Heart right ventricle (tissue), 16 donors: ENCODE measurements at regions of chr2 and their contacts with region 1.

Region 1: DNA sequence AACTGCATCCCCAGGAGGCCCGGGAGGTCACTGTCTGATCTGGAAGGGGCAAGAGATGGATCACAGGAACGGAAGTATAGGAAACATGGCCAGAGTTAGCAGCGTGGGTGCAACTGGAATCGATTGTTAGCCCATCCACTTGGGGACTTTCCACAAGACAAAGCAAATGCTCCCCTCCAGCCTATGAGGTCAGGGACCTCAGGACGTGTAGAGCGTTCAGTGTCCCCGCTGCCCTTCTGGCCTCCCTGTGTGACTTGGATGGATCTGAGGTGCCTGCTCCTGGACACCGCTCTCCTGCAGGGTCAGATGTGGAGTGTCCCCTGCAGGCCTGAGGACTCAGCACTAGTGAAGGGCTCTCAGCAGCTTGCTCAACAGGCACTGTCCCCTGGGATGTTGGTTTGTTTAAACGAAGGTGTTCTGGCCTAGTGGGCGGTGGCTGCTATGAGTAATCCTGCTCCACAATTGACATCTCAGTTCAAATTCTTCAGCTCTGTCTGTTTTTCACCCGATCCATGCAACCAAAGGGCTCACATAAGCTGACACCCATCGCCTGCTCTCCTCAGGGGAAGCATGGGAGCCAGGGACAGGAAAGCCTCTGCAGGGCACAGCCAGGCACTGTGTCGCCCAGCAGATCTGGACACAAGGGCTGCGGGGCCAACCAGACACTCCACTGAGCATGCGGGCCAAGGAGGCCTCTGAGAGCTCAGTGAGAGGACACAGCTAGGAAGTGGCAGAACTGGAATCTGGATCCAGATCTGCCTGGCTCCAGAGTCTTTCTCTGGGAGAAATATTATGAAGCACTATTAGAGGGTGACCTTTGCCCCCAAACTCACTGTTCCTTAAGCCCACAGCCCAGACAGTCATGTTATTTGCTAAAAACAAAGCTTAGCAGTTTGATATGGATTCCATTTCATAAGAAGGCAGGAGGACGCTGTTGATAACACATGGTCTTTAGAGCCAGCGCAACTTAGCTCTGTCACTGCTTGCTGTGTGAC is 78.5 kb downstream of the RHOB start:
- DNase-seq: peak; percentile 34 to 37
- ATAC-seq: peak; percentile 34 to 79 (median 62)
- H3K4me3 ChIP-seq: no peak overlapping the region
- H3K27ac ChIP-seq: peak overlapping the region; percentile 28 to 88 (median 73)
- H3K4me1 ChIP-seq: peaks cover 26 to 70% (median 47%) of the 10 kb centered on the region in 9 donors
- H3K27me3 ChIP-seq: no peaks in the 10 kb centered on the region
- CTCF ChIP-seq: no peak

Region 2: GRCh38 chr2:18611184-18611583 is 1914.2 kb before region 1 on chr2:
- intact Hi-C with region 1: loop called in 1 of 10 experiments (anchors 5 kb)
- DNase-seq: no peak
- ATAC-seq: no peak
- H3K4me3 ChIP-seq: no peak overlapping the region
- H3K27ac ChIP-seq: no peak overlapping the region
- H3K4me1 ChIP-seq: peaks cover 0 to 14% (median 4%) of the 10 kb centered on the region in 9 donors
- H3K27me3 ChIP-seq: no peaks in the 10 kb centered on the region
- CTCF ChIP-seq: no peak

Region 3: DNA sequence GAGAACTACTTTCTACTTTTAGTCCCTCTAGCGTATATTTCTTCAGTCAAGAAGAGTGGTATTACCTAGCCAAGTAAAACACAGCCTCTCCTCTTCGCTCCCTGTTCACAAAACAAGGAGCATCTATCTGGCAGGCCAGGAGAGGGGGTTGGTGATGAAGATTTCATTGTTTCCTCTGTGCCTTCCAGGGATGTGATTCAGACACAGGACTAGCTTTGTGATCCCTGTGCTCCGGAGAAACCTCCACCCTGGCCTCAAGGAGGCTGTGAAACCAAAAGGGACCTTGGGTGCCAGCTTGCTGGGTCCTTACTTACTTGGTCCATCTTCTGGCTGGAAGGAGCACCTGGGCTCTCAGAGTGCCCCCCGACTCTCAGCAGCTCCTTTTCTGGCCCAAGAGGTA is 72.8 kb before region 1 on chr2:
- intact Hi-C with region 1: loop called in 6 of 10 experiments (anchors 2 to 10 kb)
- DNase-seq: peak in 1 of 2 donors; percentile 32
- ATAC-seq: no peak
- H3K4me3 ChIP-seq: no peak overlapping the region
- H3K27ac ChIP-seq: peak overlapping the region in 6 of 10 donors; percentile 16 to 100 (median 75)
- H3K4me1 ChIP-seq: peaks cover 12 to 42% (median 33%) of the 10 kb centered on the region in 9 donors
- H3K27me3 ChIP-seq: no peaks in the 10 kb centered on the region
- CTCF ChIP-seq: peak in 7 of 9 donors; percentile 9 to 50 (median 32)

Region 4: DNA sequence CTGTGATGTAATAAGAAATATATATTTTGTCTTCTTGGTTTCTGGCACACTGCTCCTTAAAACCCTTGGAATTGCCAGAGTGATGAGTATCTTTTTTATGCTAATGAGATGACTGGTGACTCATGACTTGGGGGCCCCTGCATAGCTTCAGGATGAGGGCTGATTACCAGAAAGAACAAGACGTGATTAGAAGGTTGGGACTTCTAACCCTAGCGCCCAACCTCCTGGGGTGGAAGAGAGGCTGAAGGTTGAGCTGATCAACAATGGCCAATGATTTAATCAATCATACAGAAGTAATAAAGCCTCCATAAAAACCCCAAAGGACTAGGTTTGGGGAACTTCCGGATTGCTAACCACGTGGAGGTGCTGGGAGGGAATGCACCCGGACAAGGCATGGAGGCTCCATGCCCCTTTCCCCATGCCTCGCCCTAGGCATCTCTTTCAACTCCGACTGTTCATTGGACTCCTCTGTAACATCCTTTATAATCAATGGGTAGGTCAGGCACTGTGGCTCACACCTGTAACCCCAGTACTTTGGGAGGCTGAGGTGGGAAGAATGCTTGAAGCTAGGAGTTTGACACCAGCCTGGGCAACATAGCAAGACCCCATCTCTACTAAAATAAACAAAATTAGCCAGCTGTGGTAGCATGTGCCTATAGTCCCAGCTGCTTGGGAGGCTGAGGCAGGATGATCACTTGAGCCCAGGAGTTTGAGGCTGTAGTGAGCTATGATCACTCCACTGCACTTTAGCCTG is 36.5 kb after region 1 on chr2:
- intact Hi-C with region 1: loop called in 1 of 10 experiments (anchors 5 kb)
- DNase-seq: no peak
- ATAC-seq: no peak
- H3K4me3 ChIP-seq: no peak overlapping the region
- H3K27ac ChIP-seq: no peak overlapping the region
- H3K4me1 ChIP-seq: peaks cover 0 to 28% (median 12%) of the 10 kb centered on the region in 9 donors
- H3K27me3 ChIP-seq: no peaks in the 10 kb centered on the region
- CTCF ChIP-seq: no peak

Region 5: GRCh38 chr2:20617892-20618467 is 92.6 kb after region 1 on chr2:
- intact Hi-C with region 1: loop called in 2 of 10 experiments (anchors 5 kb)
- DNase-seq: peak; percentile 96 to 98
- ATAC-seq: peak; percentile 77 to 90 (median 84)
- H3K4me3 ChIP-seq: peak overlapping the region in 1 of 10 donors; percentile 1
- H3K27ac ChIP-seq: peak overlapping the region; percentile 87 to 99 (median 96)
- H3K4me1 ChIP-seq: peaks cover 63 to 100% (median 92%) of the 10 kb centered on the region in 9 donors
- H3K27me3 ChIP-seq: no peaks in the 10 kb centered on the region
- CTCF ChIP-seq: peak; percentile 35 to 73 (median 60)

Region 6: DNA sequence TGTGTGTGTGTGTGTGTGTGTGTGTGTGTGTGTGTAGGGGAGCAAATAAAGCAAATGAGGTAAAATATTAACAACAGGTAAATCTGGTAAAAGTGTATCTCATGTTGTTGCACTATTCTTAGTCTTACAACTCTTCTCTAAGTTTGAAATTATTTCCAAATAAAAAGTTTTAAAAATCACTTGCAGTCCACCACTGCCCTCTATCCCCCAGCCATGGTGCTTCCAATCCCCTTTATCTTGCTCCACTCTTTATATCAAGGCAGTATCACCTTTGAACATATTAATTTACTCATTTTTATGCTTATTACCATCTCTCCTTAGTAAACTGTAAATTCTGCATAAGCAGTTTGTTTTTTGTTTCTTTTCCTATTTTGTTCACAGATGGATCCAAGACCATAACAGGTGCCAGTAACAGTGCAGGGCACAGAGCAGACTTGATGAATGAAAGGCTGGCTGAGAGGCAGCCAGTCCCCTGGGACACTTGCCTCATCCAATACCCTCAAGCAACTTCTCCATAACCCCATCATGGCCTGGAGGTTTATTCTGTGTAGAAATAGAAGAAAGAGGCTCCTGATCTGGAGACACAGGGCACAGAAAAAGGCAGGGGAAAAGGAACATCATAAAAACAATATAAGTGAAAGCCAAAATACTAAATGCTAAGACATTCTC is 229.9 kb after region 1 on chr2:
- intact Hi-C with region 1: no loop called
- DNase-seq: no peak
- ATAC-seq: no peak
- H3K4me3 ChIP-seq: no peak overlapping the region
- H3K27ac ChIP-seq: no peak overlapping the region
- H3K4me1 ChIP-seq: no peaks in the 10 kb centered on the region
- H3K27me3 ChIP-seq: no peaks in the 10 kb centered on the region
- CTCF ChIP-seq: peak in 2 of 9 donors; percentile 16 to 27